ENCODE measurements at regions of chr2 and their contacts with region 1.

Region 1: GRCh38 chr2:61016808-61017555 is 538 bp upstream of the PEX13 start:
- DNase-seq: peak; percentile 93
- H3K4me3 ChIP-seq: peak overlapping the region; percentile 84 to 96 (median 94)
- H3K27ac ChIP-seq: peak overlapping the region; percentile 88 to 95 (median 92)
- H3K4me1 ChIP-seq: peaks cover 25 to 54% (median 44%) of the 10 kb centered on the region in 4 donors
- H3K27me3 ChIP-seq: no peaks in the 10 kb centered on the region
- CTCF ChIP-seq: no peak
- EP300 ChIP-seq: no peak
- POLR2A ChIP-seq: no peak

Region 2: GRCh38 chr2:60446413-60447267 is 570.3 kb before region 1 on chr2:
- intact Hi-C with region 1: no loop called
- DNase-seq: no peak
- H3K4me3 ChIP-seq: no peak overlapping the region
- H3K27ac ChIP-seq: no peak overlapping the region
- H3K4me1 ChIP-seq: no peaks in the 10 kb centered on the region
- H3K27me3 ChIP-seq: no peaks in the 10 kb centered on the region
- CTCF ChIP-seq: no peak
- EP300 ChIP-seq: no peak
- POLR2A ChIP-seq: no peak

Region 3: DNA sequence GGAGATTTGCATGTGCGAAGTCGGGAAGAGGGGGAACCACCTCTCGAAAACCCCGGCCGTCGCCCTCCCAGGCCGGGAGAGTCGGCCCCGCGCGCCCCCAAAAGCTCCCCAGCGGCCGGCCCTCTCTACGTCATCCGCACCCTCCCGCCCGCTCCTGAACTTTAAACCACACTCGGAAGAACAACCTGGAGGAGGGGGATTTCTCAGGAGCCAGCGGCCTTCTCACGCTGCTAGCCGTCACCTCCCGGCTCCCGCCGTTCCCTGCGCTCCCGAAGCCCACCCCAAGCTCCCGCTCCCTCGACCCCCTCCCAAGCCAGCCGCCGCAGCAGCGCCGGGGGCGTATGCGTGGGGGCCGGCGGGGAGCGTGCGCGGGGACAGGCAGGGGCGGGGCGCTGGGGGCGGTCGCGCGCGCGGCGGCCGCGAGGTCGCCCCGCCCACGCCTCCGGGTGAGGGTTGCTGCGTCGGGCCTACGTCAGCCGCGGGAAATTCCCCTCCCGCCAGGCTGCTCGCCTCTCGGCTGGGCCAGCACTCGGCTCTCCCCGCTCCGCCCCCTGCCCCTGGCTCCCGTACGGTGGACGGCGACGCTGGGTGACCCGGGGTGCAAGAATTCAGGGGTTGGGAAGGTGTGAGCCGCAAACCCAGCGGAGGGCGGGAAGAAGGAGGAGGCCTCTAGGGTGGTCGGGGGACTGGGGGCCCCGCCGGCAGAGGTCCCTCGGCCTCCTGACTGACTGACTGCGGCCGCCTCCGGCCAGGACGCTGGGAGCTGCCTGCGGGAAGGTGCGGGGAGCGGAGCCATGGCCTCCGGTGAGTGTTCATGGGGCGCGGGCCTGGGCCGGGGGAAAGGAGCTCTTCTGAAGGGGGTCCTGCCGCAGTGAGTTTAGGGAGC is 135.7 kb before region 1 on chr2 and contains the start of gene REL:
- intact Hi-C with region 1: loop called (anchors 5 kb)
- DNase-seq: peak; percentile 96
- H3K4me3 ChIP-seq: peak within 1 kb of the TSS; percentile 75 to 93 (median 90)
- H3K27ac ChIP-seq: peak within 1 kb of the TSS; percentile 93 to 99 (median 98)
- H3K4me1 ChIP-seq: peaks cover 12 to 45% (median 40%) of the 10 kb centered on the region in 4 donors
- H3K27me3 ChIP-seq: no peaks in the 10 kb centered on the region
- CTCF ChIP-seq: peak in 1 of 3 experiments; percentile 3
- EP300 ChIP-seq: peak; percentile 57
- POLR2A ChIP-seq: peak; percentile 64
- total RNA-seq, gene REL: 9.1 to 16.2 (median 9.5) TPM

Region 4: DNA sequence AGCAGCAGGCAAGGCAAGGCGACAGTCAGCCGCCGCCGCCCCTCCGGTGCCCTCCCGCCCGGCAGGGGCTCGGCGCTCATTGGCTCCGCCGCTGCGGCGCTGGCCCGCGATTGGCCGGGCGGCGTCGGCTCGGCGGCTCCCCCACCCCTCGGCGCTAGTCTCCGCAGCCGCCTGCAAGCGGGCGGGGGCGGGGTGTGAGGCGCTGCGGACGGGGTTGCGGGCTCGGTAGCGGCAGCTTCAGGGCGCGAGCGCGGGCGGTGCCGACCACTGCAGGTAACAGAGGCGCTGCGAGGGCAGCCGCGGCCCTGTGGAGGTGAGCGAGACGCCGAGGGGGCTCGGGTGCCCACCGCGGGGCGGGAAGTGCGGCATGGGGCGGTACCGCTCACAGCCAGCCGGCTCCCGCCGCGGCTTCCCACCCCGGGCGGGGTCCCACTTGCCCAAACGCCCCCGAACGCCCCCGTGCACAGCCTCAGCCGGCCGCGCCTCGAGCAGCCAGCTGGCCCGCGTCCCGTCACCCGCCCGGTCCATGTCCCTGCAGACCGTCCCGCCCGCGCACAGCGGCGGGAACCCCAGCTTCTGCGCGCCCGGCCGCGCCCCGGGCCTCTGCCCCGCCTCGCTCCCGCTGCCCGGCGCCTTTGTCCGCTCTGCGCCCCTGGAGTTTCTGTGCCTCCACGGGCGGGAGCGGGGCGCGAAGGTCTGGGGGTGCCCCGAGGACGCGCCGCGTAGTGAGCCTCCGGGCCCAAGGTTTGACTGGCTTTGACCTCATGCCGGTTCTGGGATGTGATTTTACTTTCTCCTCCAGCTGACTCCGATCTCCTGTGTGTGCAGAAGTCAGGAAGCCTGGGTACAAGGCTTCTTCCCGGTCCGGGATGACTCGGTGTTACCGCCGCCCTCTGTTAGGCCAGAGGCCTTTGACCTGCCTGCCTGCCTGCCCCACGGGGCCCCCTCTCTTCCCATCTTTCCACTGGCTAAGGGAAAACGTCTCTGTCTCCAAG is 49.0 kb after region 1 on chr2 and contains the start of gene SANBR:
- intact Hi-C with region 1: loop called (anchors 2 kb)
- DNase-seq: peak; percentile 93
- H3K4me3 ChIP-seq: peak within 1 kb of the TSS; percentile 81 to 100 (median 92)
- H3K27ac ChIP-seq: peak within 1 kb of the TSS; percentile 80 to 89 (median 84)
- H3K4me1 ChIP-seq: peaks cover 0 to 21% (median 13%) of the 10 kb centered on the region in 4 donors
- H3K27me3 ChIP-seq: no peaks in the 10 kb centered on the region
- CTCF ChIP-seq: no peak
- EP300 ChIP-seq: no peak
- POLR2A ChIP-seq: no peak
- total RNA-seq, gene SANBR: 5.0 to 7.5 (median 6.3) TPM

Measured in esophagus muscularis mucosa (tissue), 4 donors.